ENCODE measurements at regions of chr9 and their contacts with region 1.

Region 1: DNA sequence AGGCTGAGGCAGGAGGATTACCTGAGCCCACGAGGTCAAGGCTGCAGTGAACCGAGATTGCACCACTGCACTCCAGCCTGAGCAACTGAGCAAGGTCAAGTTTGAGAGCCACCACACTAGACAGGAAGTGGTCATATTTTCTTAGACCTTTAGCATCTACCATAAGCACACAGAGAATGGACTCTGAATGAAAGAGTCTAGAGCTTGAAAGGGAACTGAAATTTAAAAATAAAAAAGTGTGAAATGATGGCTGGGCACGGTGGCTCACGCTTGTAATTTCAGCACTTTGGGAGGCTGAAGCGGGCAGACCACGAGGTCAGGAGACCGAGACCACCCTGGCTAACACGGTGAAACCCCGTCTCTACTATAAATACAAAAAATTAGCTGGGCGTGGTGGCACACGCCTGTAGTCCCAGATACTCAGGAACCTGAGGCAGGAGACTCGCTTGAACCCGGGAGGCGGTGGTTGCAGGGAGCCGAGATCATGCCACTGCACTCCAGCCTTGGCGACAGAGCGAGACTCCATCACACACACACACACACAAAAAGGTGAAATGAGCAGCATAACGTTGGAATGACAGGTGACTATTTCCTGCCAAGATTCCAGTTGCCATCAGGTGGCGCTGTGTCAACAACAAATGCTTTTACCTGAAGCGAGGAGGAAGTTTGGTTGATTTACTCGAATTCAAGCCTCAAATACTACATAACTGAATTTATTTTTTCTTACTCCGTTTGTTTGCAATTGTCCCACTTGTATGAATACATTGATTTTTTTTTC is 21.3 kb upstream of the AK3 start:
- DNase-seq: peak; percentile 61
- ATAC-seq: peak; percentile 70
- H3K4me3 Mint-ChIP-seq: peak overlapping the region; percentile 72
- H3K27ac Mint-ChIP-seq: peak overlapping the region; percentile 54
- H3K4me1 Mint-ChIP-seq: peaks cover 24% of the 10 kb centered on the region
- H3K27me3 Mint-ChIP-seq: no peaks in the 10 kb centered on the region
- CTCF ChIP-seq: no peak

Region 2: DNA sequence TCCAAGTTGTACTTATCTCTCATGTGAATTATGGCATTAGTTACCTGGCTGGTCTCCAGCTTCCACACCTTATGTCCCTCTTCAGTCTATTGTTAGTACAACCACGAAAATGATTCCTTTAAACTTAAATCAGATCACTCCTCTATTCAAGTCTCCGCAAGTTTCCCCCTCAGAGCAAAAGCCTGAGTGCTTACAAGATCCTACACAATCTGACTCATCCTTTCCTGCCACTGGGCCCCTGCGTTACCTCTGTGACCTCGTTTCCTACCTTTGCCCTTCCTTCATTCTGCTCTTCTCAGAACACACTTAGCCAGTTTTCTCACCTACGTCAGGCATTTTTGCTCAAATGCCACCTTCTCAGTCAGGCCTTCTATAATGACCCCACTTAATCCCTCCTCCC is 417.4 kb before region 1 on chr9:
- CTCF ChIA-PET with region 1: no interaction called
- POLR2A ChIA-PET with region 1: no interaction called
- intact Hi-C with region 1: no loop called
- DNase-seq: no peak
- ATAC-seq: no peak
- H3K4me3 Mint-ChIP-seq: no peak overlapping the region
- H3K27ac Mint-ChIP-seq: no peak overlapping the region
- H3K4me1 Mint-ChIP-seq: no peaks in the 10 kb centered on the region
- H3K27me3 Mint-ChIP-seq: peaks cover 10% of the 10 kb centered on the region
- CTCF ChIP-seq: no peak

Region 3: DNA sequence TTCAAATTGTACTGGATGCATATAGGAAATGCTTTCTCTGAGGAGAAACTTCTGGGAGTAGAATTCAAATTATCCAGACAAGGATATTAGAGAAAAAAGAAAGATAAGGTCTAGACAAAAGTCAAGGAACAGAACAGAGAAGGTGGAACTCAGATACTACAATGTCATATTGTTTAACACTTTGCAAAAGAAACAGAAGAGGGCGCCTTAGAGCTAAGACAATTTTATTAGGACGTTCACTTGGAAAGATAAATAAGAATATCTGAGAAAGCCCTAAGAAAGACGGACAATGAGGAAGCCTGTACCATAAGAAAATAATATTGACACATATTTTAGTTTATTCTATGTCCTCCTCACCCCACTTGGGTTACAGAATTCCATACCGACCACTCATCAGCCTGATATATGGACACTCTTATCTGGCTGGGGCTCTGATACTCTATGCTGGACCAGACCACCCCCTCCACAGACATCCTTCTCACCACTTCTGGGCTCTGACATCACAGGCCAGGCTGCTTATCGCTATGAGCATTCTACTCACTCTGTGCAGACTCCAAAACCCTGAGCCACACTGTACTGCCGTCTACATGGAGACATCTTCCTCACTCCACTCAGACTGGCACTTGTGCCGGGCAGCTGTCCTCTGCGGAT is 12.1 kb before region 1 on chr9:
- CTCF ChIA-PET with region 1: interaction called, 13 read pairs
- POLR2A ChIA-PET with region 1: no interaction called
- intact Hi-C with region 1: no loop called
- DNase-seq: no peak
- ATAC-seq: peak; percentile 49
- H3K4me3 Mint-ChIP-seq: no peak overlapping the region
- H3K27ac Mint-ChIP-seq: no peak overlapping the region
- H3K4me1 Mint-ChIP-seq: no peaks in the 10 kb centered on the region
- H3K27me3 Mint-ChIP-seq: no peaks in the 10 kb centered on the region
- CTCF ChIP-seq: peak; percentile 71

Region 4: GRCh38 chr9:4792572-4793458 is 30.5 kb after region 1 on chr9 and contains the start of gene RCL1:
- CTCF ChIA-PET with region 1: interaction called, 11 read pairs
- POLR2A ChIA-PET with region 1: no interaction called
- intact Hi-C with region 1: loop called (anchors 1 kb)
- DNase-seq: peak; percentile 97
- ATAC-seq: peak; percentile 93
- H3K4me3 Mint-ChIP-seq: peak within 1 kb of the TSS; percentile 97
- H3K27ac Mint-ChIP-seq: peak within 1 kb of the TSS; percentile 96
- H3K4me1 Mint-ChIP-seq: peaks cover 40% of the 10 kb centered on the region
- H3K27me3 Mint-ChIP-seq: peaks cover 2% of the 10 kb centered on the region
- CTCF ChIP-seq: no peak
- total RNA-seq, gene RCL1: 23.9 and 26.0 TPM in 2 replicates

Region 5: GRCh38 chr9:5052838-5053237 is 290.5 kb after region 1 on chr9:
- CTCF ChIA-PET with region 1: interaction called, 3 read pairs
- POLR2A ChIA-PET with region 1: no interaction called
- intact Hi-C with region 1: loop called (anchors 5 kb)
- DNase-seq: no peak
- ATAC-seq: no peak
- H3K4me3 Mint-ChIP-seq: no peak overlapping the region
- H3K27ac Mint-ChIP-seq: no peak overlapping the region
- H3K4me1 Mint-ChIP-seq: no peaks in the 10 kb centered on the region
- H3K27me3 Mint-ChIP-seq: no peaks in the 10 kb centered on the region
- CTCF ChIP-seq: no peak

Region 6: DNA sequence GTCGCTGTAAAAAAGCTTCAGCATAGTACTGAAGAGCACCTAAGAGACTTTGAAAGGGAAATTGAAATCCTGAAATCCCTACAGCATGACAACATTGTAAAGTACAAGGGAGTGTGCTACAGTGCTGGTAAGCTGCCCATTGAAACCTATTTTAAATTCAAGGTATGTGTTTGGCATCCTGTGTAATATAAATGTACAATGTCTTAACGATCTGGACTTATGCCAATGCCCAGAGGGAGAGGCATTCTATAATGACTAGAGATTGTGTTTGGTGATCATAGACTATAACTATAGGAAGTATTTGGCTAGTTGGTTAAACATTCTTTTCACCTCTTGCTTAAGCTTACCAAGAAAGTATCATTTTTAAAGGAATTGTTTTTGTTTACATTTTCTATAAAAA is 327.4 kb after region 1 on chr9:
- CTCF ChIA-PET with region 1: no interaction called
- POLR2A ChIA-PET with region 1: no interaction called
- intact Hi-C with region 1: no loop called
- DNase-seq: no peak
- ATAC-seq: no peak
- H3K4me3 Mint-ChIP-seq: no peak overlapping the region
- H3K27ac Mint-ChIP-seq: no peak overlapping the region
- H3K4me1 Mint-ChIP-seq: no peaks in the 10 kb centered on the region
- H3K27me3 Mint-ChIP-seq: no peaks in the 10 kb centered on the region
- CTCF ChIP-seq: no peak

Region 7: DNA sequence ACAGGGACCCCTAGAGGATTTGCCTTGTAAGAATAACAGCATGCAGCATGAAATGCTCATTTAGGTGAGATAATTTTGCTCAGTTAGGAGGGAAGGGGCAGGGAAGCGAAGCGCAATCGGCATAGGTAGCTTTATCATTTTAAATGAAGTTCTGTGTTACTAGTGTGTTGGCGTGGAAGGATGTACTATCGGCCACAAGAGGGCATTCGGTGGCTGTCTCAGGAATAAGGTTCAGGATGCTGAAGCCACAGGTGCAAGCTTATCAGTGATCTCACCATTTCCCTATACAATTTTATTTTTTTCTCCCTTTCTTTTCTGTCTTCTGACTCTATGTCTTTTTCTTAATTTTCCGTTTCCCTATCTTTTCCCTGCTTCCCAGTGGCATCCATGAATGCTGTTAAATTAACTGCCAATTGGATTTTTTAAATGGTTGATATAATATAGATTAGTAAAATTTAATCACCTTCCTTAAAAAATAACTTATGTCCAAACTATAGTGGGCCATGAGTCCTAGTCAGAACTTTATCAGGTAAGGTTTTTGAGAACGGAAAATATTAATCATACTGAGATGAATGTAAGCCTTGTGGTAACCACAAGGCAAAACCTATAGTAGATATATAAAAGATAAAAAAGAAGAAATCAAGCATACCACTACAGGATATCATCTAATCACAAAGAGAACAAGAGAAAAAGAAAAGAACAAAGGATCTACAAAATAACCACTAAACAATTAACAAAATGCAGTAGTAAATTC is 424.3 kb after region 1 on chr9:
- CTCF ChIA-PET with region 1: interaction called, 4 read pairs
- POLR2A ChIA-PET with region 1: no interaction called
- intact Hi-C with region 1: loop called (anchors 1 kb)
- DNase-seq: no peak
- ATAC-seq: peak; percentile 81
- H3K4me3 Mint-ChIP-seq: no peak overlapping the region
- H3K27ac Mint-ChIP-seq: no peak overlapping the region
- H3K4me1 Mint-ChIP-seq: peaks cover 12% of the 10 kb centered on the region
- H3K27me3 Mint-ChIP-seq: no peaks in the 10 kb centered on the region
- CTCF ChIP-seq: no peak

Region 8: GRCh38 chr9:5425006-5425628 is 662.8 kb after region 1 on chr9:
- CTCF ChIA-PET with region 1: interaction called, 3 read pairs
- POLR2A ChIA-PET with region 1: no interaction called
- intact Hi-C with region 1: loop called (anchors 1 kb)
- DNase-seq: no peak
- ATAC-seq: no peak
- H3K4me3 Mint-ChIP-seq: no peak overlapping the region
- H3K27ac Mint-ChIP-seq: no peak overlapping the region
- H3K4me1 Mint-ChIP-seq: peaks cover 14% of the 10 kb centered on the region
- H3K27me3 Mint-ChIP-seq: no peaks in the 10 kb centered on the region
- CTCF ChIP-seq: no peak

Region 9: DNA sequence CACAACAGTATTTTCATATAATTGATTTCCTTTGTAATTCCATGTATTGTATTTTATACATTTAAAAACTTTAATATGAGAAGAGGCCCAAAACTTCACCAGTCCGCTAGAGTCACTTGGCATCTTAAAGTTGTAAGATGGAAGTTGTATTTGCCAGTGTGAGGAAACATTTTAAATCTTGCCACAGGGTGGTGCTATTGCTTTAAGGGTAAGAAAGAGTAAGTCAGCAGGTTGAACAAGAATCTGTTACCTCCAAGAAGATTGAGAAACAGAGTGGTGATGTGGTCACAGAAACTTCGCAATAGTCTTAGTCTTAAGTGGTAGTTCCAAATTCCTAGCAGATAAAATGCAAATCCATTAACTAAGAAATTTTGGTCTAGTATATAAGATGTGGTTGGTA is 1292.9 kb after region 1 on chr9:
- CTCF ChIA-PET with region 1: interaction called, 4 read pairs
- POLR2A ChIA-PET with region 1: no interaction called
- intact Hi-C with region 1: loop called (anchors 10 kb)
- DNase-seq: no peak
- ATAC-seq: peak; percentile 23
- H3K4me3 Mint-ChIP-seq: no peak overlapping the region
- H3K27ac Mint-ChIP-seq: no peak overlapping the region
- H3K4me1 Mint-ChIP-seq: peaks cover 19% of the 10 kb centered on the region
- H3K27me3 Mint-ChIP-seq: peaks cover 3% of the 10 kb centered on the region
- CTCF ChIP-seq: no peak

Measured in activated B cell treated with CpG ODN at 0.5 μM for 24 hours (primary cell).